ENCODE measurements at regions of chr2 and their contacts with region 1.

Region 1: DNA sequence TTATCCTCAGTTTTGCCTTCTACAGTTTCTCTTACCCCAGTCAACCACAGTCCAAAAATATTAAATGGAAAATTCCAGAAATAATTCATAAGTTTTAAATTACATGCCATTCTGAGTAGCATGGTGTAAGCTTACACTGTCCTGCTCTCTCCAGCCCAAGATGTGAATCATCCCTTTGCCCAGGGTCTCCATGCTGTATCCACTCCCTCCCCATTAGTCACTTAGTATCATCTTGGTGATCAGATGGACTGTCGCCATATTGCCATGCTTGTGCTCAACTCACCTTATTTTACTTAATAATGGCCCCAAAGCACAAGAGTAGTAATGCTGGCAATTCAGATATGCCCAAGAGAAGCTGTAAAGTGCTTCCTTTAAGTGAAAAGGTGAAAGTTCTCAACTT is 18.5 kb upstream of the CCNT2 start:
- DNase-seq: no peak

Region 2: GRCh38 chr2:134457765-134458472 is 442.2 kb before region 1 on chr2:
- intact Hi-C with region 1: loop called (anchors 10 kb)
- DNase-seq: peak in 1 of 42 donors; percentile 10

Region 3: GRCh38 chr2:134819334-134819733 is 80.8 kb before region 1 on chr2:
- intact Hi-C with region 1: no loop called
- DNase-seq: peak in 4 of 42 donors; percentile 2 to 18 (median 8)

Measured in head of caudate nucleus (tissue), 42 donors.